ENCODE measurements at regions of chr16 and their contacts with region 1.

Region 1: GRCh38 chr16:27179500-27180072 is 23.7 kb upstream of the KDM8 start:
- DNase-seq: peak; percentile 95
- ATAC-seq: peak; percentile 95
- H3K4me3 Mint-ChIP-seq: no peak overlapping the region
- H3K27ac Mint-ChIP-seq: peak overlapping the region; percentile 73
- H3K4me1 Mint-ChIP-seq: peaks cover 37% of the 10 kb centered on the region
- H3K27me3 Mint-ChIP-seq: peaks cover 8% of the 10 kb centered on the region

Region 2: DNA sequence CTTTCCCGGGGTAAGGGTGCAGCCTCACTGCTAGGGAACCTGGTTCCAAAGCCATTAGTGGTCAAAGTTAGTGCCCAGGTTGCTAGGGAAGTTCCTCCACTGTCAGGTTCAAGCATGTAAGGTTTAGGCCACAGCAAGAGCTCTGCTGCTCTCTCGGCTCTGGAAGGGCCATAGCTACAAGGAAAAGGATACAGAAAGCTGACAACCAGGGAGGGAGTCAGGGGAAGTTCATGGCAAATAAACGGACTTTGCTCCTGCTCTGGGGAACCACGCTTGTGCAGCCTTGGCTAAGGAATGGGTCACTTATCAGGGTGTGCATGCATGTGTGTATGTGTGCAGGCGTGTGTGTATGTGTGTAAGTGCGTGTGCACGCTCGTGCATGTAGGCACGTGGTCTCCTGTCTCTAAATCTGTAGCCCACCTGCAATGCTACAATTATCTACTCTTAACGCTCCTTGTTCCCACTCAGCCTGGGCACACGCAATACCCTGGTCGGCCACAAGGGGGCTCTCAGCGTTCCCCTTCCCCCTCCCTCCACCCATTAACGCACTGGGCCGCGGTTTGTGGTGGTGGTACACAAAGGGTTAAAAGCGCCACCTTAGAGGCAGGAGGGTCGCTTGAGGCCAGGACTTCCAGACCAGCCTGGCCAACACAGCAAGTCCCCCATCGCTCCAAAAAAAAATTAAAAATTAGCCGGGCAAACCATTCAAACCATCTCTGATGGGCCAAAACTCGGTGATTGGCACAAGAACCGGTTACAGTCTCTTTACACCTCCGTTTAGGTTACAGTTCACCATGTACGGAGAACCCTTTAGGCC is 24.7 kb before region 1 on chr16:
- CTCF ChIA-PET with region 1: interaction called, 18 read pairs
- POLR2A ChIA-PET with region 1: no interaction called
- DNase-seq: peak; percentile 76
- ATAC-seq: peak; percentile 76
- H3K4me3 Mint-ChIP-seq: no peak overlapping the region
- H3K27ac Mint-ChIP-seq: no peak overlapping the region
- H3K4me1 Mint-ChIP-seq: peaks cover 17% of the 10 kb centered on the region
- H3K27me3 Mint-ChIP-seq: no peaks in the 10 kb centered on the region

Region 3: GRCh38 chr16:27203429-27204231 is 24.0 kb after region 1 on chr16 and contains the start of gene KDM8:
- CTCF ChIA-PET with region 1: interaction called, 107 read pairs
- POLR2A ChIA-PET with region 1: interaction called, 12 read pairs
- DNase-seq: peak; percentile 100
- ATAC-seq: peak; percentile 95
- H3K4me3 Mint-ChIP-seq: peak within 1 kb of the TSS; percentile 98
- H3K27ac Mint-ChIP-seq: peak within 1 kb of the TSS; percentile 99
- H3K4me1 Mint-ChIP-seq: peaks cover 59% of the 10 kb centered on the region
- H3K27me3 Mint-ChIP-seq: no peaks in the 10 kb centered on the region
- total RNA-seq, gene KDM8: 14.7 to 15.0 TPM

Region 4: GRCh38 chr16:27313422-27314160 is 134.0 kb after region 1 on chr16 and contains the start of gene IL4R:
- CTCF ChIA-PET with region 1: interaction called, 28 read pairs
- POLR2A ChIA-PET with region 1: interaction called, 6 read pairs
- DNase-seq: peak; percentile 66
- ATAC-seq: peak; percentile 49
- H3K4me3 Mint-ChIP-seq: peak within 1 kb of the TSS; percentile 90
- H3K27ac Mint-ChIP-seq: peak within 1 kb of the TSS; percentile 93
- H3K4me1 Mint-ChIP-seq: peaks cover 48% of the 10 kb centered on the region
- H3K27me3 Mint-ChIP-seq: peaks cover 2% of the 10 kb centered on the region
- total RNA-seq, gene IL4R: 231 to 237 TPM

Region 5: GRCh38 chr16:27374804-27375425 is 195.3 kb after region 1 on chr16:
- CTCF ChIA-PET with region 1: interaction called, 96 read pairs
- POLR2A ChIA-PET with region 1: interaction called, 3 read pairs
- DNase-seq: peak; percentile 61
- ATAC-seq: peak; percentile 47
- H3K4me3 Mint-ChIP-seq: no peak overlapping the region
- H3K27ac Mint-ChIP-seq: no peak overlapping the region
- H3K4me1 Mint-ChIP-seq: peaks cover 45% of the 10 kb centered on the region
- H3K27me3 Mint-ChIP-seq: no peaks in the 10 kb centered on the region

Region 6: DNA sequence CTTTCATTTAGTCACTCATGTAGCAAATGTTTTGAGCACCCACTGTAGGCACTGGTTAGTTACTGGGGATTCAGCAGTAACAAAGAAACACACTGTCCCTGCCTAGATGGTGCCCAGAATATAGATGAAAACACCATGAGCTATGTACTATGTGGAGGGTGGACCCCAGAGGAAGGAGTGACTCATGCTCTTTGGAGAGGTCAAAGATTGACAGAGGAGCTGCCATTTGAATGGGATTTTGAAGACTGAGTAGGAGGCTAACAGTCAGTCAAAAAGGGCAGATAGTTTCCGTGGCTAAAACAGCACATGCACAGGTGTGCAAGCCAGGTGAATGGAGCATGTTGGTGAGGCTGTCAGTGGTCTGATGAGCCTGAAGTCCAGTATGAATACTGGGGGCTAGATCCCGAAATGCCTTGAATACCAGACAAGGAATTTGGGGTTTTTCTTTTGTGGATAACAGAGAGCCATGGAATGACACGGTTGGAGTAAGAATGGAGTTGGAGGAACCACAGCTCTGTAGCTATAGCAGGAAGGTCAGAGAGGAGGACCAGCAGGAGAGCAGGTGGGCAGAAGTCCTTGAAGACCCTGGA is 228.5 kb after region 1 on chr16:
- CTCF ChIA-PET with region 1: interaction called, 14 read pairs
- POLR2A ChIA-PET with region 1: interaction called, 3 read pairs
- DNase-seq: peak; percentile 55
- ATAC-seq: peak; percentile 62
- H3K4me3 Mint-ChIP-seq: peak overlapping the region; percentile 40
- H3K27ac Mint-ChIP-seq: peak overlapping the region; percentile 84
- H3K4me1 Mint-ChIP-seq: peaks cover 82% of the 10 kb centered on the region
- H3K27me3 Mint-ChIP-seq: no peaks in the 10 kb centered on the region

Region 7: DNA sequence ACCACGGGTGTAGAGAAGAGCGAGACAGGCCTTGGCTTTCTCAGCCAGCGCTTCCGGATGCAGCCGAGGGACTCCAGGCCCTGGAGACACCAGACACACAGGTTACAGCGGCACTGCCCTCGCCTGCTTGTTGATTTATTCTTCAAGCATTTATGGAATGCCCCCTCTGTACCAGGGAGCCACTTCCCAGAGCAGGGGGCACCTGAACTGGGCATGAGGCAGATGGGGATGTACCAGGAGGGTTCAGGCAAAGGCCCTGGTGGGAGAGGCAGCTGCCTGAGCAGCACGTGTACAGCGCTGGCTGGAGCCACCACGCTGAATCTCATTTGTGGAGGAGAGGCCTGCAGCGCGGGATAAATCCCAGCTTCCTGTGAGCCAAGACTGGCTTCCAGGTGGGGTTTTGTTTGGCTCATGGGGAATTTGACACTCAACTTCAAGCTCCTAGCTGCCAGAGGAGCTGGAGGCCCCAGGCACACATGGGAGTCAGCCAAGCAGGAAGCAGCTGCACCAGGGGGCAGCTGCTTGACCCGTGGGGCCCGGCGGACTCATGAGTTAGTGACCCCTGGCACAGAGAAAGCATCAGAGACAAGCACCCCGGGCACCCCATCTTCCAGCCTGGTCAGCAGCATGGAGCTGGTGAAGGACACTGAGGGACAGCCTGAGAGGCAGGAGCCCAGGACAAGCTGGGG is 282.0 kb after region 1 on chr16:
- CTCF ChIA-PET with region 1: interaction called, 18 read pairs
- POLR2A ChIA-PET with region 1: interaction called, 3 read pairs
- DNase-seq: no peak
- ATAC-seq: no peak
- H3K4me3 Mint-ChIP-seq: no peak overlapping the region
- H3K27ac Mint-ChIP-seq: peak overlapping the region; percentile 34
- H3K4me1 Mint-ChIP-seq: peaks cover 61% of the 10 kb centered on the region
- H3K27me3 Mint-ChIP-seq: no peaks in the 10 kb centered on the region

Measured in activated CD8-positive, alpha-beta T cell treated with anti-CD3 and anti-CD28 coated beads, Interleukin-2, amount 10 ng/mL, durations not matched to agents 7 days and 5 days (primary cell).